Activated T-helper 2 cell treated with anti-CD3 and anti-CD28 coated beads, Interferon-gamma antibody, Interleukin-2, Interleukin-4, amounts not matched to agents 10 μg/mL and 5 μg/mL and 100 μg/mL, durations not matched to agents 14 hours and 24 hours and 36 hours (primary cell): ENCODE measurements at regions of chr7 and their contacts with region 1.

Region 1: DNA sequence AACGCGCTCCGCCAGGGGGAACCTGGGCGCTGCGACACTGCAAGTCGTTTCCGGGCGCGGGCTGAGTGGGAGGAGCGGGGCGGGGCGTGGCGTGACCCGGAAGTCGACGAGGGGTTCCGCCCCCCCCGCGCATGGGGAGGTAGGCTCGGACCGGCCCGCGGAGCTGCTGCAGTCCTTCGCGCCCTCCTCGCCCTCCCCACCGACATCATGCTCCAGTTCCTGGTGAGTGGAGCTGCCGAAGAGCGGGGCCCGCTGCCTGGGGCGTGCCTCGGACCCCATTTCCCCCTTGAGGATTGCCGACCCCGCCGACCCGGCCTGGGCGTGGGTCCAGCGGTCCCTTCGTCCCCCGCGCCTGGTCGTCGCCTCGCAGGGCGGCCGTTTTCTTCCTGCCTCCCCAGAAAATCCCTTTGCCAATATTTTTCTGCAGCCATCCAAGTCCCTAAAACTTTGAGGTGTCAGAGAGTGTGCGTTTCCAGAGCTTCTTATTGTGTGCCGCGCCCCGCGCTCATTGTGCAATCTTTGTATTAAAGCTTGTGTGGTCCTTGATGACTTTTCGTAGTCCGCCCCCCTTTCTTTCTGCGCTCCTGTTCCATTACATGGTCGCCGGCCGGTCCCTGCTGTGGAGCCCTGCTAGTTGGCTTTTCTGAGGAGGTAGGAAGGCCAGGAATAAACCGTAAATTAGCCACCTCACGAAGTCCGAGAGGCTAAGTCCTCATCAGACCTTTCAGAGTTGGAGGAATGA is at the start of gene STMP1:
- DNase-seq: peak; percentile 92
- H3K4me3 Mint-ChIP-seq: peak within 1 kb of the TSS; percentile 95
- H3K27ac Mint-ChIP-seq: peak within 1 kb of the TSS; percentile 91
- H3K4me1 Mint-ChIP-seq: peaks cover 28% of the 10 kb centered on the region
- H3K27me3 Mint-ChIP-seq: no peaks in the 10 kb centered on the region
- total RNA-seq, gene STMP1: 24.3 and 25.1 TPM in 2 replicates

Region 2: DNA sequence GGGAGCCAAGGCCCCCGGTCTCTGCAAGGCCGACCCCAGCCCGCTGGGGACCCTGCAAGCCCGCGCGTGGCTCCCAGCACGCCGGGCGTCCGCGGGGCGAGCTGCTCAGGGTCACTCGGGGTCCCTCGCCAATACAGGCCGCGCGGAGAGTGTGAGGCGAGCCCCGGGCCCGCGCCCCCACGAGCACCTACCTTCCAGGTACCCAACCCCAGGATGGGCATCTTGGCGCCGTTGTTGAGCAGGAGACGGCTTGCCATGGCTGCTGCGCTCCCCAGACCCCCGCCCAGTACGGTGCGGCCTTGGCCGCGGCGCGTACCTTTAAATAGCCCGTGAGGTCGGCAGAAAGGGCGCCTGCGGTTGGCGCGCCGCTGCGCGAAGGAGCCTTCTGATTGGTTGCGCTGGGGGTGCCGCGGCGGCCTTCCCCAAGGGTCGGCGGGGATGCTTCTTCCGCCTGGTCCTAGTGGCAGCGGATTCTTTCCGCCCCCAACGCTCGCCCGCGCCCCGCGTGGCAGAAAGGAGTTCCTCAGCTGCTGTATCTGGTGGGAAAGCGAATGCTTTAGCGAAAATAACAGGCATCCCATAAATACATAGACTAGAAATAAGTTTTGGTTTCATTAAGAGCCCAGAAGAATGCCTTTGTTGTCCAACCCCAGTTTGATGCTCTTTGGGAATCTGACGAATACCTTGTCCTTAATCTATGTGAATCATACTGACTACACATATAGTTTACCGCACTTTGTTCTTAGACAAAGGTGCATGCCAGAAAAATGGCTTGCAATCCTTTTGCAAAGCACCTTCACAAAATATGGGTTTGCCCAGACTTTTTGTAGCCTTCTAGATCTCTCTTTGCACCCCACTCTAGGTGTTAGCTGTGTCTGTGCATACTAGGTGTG is 1203.5 kb before region 1 on chr7 and contains the start of gene AKR1B1:
- intact Hi-C with region 1: loop called (anchors 10 kb)
- DNase-seq: peak; percentile 85
- H3K4me3 Mint-ChIP-seq: peak within 1 kb of the TSS; percentile 82
- H3K27ac Mint-ChIP-seq: peak within 1 kb of the TSS; percentile 64
- H3K4me1 Mint-ChIP-seq: peaks cover 31% of the 10 kb centered on the region
- H3K27me3 Mint-ChIP-seq: no peaks in the 10 kb centered on the region
- total RNA-seq, gene AKR1B1: 102 and 107 TPM in 2 replicates

Region 3: GRCh38 chr7:135558337-135558767 is 104.2 kb before region 1 on chr7:
- intact Hi-C with region 1: loop called (anchors 1 kb)
- DNase-seq: peak; percentile 64
- H3K4me3 Mint-ChIP-seq: no peak overlapping the region
- H3K27ac Mint-ChIP-seq: no peak overlapping the region
- H3K4me1 Mint-ChIP-seq: peaks cover 19% of the 10 kb centered on the region
- H3K27me3 Mint-ChIP-seq: peaks cover 1% of the 10 kb centered on the region

Region 4: GRCh38 chr7:135710417-135711138 is 48.0 kb after region 1 on chr7:
- intact Hi-C with region 1: loop called (anchors 5 kb)
- DNase-seq: no peak
- H3K4me3 Mint-ChIP-seq: no peak overlapping the region
- H3K27ac Mint-ChIP-seq: no peak overlapping the region
- H3K4me1 Mint-ChIP-seq: no peaks in the 10 kb centered on the region
- H3K27me3 Mint-ChIP-seq: no peaks in the 10 kb centered on the region

Region 5: DNA sequence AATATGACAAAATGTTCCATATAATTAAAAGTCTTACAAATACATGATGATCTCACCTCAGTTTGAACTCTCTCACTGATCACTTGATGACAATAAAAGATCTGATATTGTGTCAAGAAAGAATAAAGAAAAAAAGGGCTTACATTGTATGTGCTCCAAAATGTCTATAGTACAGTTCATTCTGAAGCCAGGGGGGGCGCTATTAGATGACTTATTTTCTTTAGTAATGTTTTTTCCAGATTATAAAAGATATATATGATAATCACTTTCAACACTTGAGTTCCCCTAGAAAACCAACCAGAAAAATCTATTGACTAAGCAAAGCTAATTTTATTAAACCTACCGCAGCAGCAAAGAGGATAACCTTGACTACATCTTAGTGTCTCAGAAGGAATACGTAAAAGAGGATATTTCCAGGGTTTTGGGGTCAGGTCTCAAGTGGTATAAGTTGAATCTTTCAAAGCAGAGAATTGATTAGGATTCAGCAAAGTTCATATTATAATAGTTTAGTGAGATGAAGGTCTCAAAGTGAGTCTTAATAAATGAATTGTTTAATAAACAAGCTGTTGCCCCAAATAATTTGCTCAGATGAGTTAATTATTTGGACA is 1625.2 kb after region 1 on chr7:
- intact Hi-C with region 1: no loop called
- DNase-seq: no peak
- H3K4me3 Mint-ChIP-seq: no peak overlapping the region
- H3K27ac Mint-ChIP-seq: no peak overlapping the region
- H3K4me1 Mint-ChIP-seq: no peaks in the 10 kb centered on the region
- H3K27me3 Mint-ChIP-seq: no peaks in the 10 kb centered on the region